ENCODE measurements at regions of chr13 and their contacts with region 1.

Region 1: GRCh38 chr13:26601669-26602068 is 44.2 kb downstream of the WASF3 start:
- DNase-seq: no peak
- H3K4me3 ChIP-seq: no peak overlapping the region
- H3K27ac ChIP-seq: no peak overlapping the region
- H3K4me1 ChIP-seq: no peaks in the 10 kb centered on the region
- H3K27me3 ChIP-seq: no peaks in the 10 kb centered on the region
- CTCF ChIP-seq: peak in 1 of 4 experiments; percentile 15
- POLR2A ChIP-seq: no peak

Region 2: GRCh38 chr13:26482451-26483197 is 119.0 kb before region 1 on chr13:
- intact Hi-C with region 1: loop called (anchors 10 kb)
- DNase-seq: peak; percentile 52
- H3K4me3 ChIP-seq: no peak overlapping the region
- H3K27ac ChIP-seq: no peak overlapping the region
- H3K4me1 ChIP-seq: no peaks in the 10 kb centered on the region
- H3K27me3 ChIP-seq: no peaks in the 10 kb centered on the region
- CTCF ChIP-seq: peak; percentile 70 to 85 (median 76)
- POLR2A ChIP-seq: no peak

Region 3: DNA sequence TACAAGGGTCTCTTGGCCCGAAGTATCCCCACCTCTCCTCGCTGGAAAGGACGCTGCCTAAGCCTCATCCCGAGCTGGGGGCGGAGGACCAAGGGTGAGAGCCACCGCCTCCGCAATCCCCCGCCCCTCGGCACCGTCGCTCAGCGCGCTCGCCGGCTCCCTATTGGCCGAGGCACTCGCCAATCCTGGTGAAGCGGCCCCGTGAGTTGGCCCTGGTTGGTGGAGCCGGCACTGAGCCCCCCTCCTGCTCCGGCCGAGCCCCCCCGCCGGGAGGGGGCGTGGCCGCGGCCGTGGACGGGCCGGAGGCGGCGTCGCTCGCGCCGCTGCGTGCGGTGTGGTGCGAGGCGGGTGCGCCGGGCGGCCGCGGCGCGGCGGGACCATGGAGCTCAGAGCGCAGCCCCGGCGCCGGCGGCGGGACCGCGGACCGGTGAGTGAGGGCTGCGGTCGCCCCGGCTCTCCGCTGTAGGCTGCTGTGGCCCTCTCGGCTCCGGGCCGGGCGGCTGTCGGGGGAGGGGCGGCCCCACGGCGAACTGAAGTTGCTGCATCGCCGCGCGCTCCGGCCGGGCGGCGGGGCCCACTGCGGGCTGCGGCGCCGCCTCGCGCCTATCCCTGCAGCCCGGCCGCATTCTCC is 44.2 kb before region 1 on chr13 and contains the start of gene WASF3:
- intact Hi-C with region 1: loop called (anchors 2 kb)
- DNase-seq: peak; percentile 94
- H3K4me3 ChIP-seq: peak within 1 kb of the TSS; percentile 74 to 78
- H3K27ac ChIP-seq: peak within 1 kb of the TSS; percentile 50 to 53
- H3K4me1 ChIP-seq: no peaks in the 10 kb centered on the region
- H3K27me3 ChIP-seq: no peaks in the 10 kb centered on the region
- CTCF ChIP-seq: peak in 1 of 4 experiments; percentile 2
- POLR2A ChIP-seq: no peak
- total RNA-seq, gene WASF3: 10.3 to 23.0 TPM

Measured in prostate gland (tissue), 2 donors.